T-cell (primary cell): ENCODE measurements at regions of chr12 and their contacts with region 1.

Region 1: GRCh38 chr12:64890873-64891468 is 66.5 kb downstream of the TBC1D30 start:
- DNase-seq: peak in 3 of 35 experiments; percentile 3 to 75 (median 24)
- ATAC-seq: peak in 2 of 4 experiments; percentile 34 to 49
- H3K4me3 ChIP-seq: no peak overlapping the region
- H3K4me3 Mint-ChIP-seq: no peak overlapping the region
- H3K27ac ChIP-seq: no peak overlapping the region
- H3K27ac Mint-ChIP-seq: peak overlapping the region in 1 of 2 donors; percentile 46
- H3K4me1 ChIP-seq: no peaks in the 10 kb centered on the region
- H3K4me1 Mint-ChIP-seq: no peaks in the 10 kb centered on the region
- H3K27me3 ChIP-seq: peaks cover 0 to 3% of the 10 kb centered on the region in 2 experiments
- H3K27me3 Mint-ChIP-seq: peaks cover 10 to 26% of the 10 kb centered on the region in 2 donors

Region 2: DNA sequence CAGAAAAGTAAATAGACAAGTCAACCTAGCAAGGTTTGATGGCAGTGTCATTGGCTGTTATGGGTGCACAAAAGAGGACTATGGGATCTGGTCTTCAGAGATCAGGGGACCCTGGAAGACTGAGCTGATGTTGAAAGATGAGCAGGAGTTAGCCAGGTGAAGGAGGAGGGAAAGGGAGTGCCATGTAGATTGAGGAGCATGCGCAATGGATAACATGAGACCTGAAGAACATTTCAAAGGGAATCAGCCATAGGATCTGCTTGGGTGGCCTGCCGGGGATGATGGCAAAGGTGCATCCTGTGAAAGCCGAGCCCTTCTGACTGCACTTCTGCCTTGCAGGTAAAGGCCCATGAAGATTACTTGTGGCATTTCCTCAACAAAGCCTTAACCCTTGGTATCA is 24.3 kb after region 1 on chr12:
- CTCF ChIA-PET with region 1: no interaction called
- POLR2A ChIA-PET with region 1: no interaction called
- DNase-seq: no peak
- ATAC-seq: no peak
- H3K4me3 ChIP-seq: no peak overlapping the region
- H3K4me3 Mint-ChIP-seq: no peak overlapping the region
- H3K27ac ChIP-seq: no peak overlapping the region
- H3K27ac Mint-ChIP-seq: no peak overlapping the region
- H3K4me1 ChIP-seq: no peaks in the 10 kb centered on the region
- H3K4me1 Mint-ChIP-seq: no peaks in the 10 kb centered on the region
- H3K27me3 ChIP-seq: peaks cover 4 to 8% of the 10 kb centered on the region in 2 experiments
- H3K27me3 Mint-ChIP-seq: peaks cover 25 to 38% of the 10 kb centered on the region in 2 donors

Region 3: GRCh38 chr12:64943686-64944085 is 52.7 kb after region 1 on chr12:
- CTCF ChIA-PET with region 1: no interaction called
- POLR2A ChIA-PET with region 1: no interaction called
- DNase-seq: no peak
- ATAC-seq: no peak
- H3K4me3 ChIP-seq: no peak overlapping the region
- H3K4me3 Mint-ChIP-seq: no peak overlapping the region
- H3K27ac ChIP-seq: no peak overlapping the region
- H3K27ac Mint-ChIP-seq: no peak overlapping the region
- H3K4me1 ChIP-seq: no peaks in the 10 kb centered on the region
- H3K4me1 Mint-ChIP-seq: no peaks in the 10 kb centered on the region
- H3K27me3 ChIP-seq: peaks cover 0 to 3% of the 10 kb centered on the region in 2 experiments
- H3K27me3 Mint-ChIP-seq: peaks cover 7 to 22% of the 10 kb centered on the region in 2 donors

Region 4: GRCh38 chr12:65232476-65233077 is 341.6 kb after region 1 on chr12:
- CTCF ChIA-PET with region 1: interaction called, 15 to 69 read pairs
- POLR2A ChIA-PET with region 1: no interaction called
- DNase-seq: peak in 1 of 35 experiments; percentile 44
- ATAC-seq: peak in 1 of 4 experiments; percentile 32
- H3K4me3 ChIP-seq: no peak overlapping the region
- H3K4me3 Mint-ChIP-seq: no peak overlapping the region
- H3K27ac ChIP-seq: no peak overlapping the region
- H3K27ac Mint-ChIP-seq: peak overlapping the region in 1 of 2 donors; percentile 31
- H3K4me1 ChIP-seq: peaks cover 0 to 2% of the 10 kb centered on the region in 2 experiments
- H3K4me1 Mint-ChIP-seq: peaks cover 5 to 11% (median 10%) of the 10 kb centered on the region in 3 donors
- H3K27me3 ChIP-seq: no peaks in the 10 kb centered on the region
- H3K27me3 Mint-ChIP-seq: no peaks in the 10 kb centered on the region

Region 5: GRCh38 chr12:66087365-66087943 is 1196.5 kb after region 1 on chr12:
- CTCF ChIA-PET with region 1: interaction called, 5 to 17 read pairs
- POLR2A ChIA-PET with region 1: no interaction called
- DNase-seq: peak in 31 of 35 experiments; percentile 9 to 62 (median 34)
- ATAC-seq: peak in 1 of 4 experiments; percentile 60
- H3K4me3 ChIP-seq: no peak overlapping the region
- H3K4me3 Mint-ChIP-seq: no peak overlapping the region
- H3K27ac ChIP-seq: no peak overlapping the region
- H3K27ac Mint-ChIP-seq: no peak overlapping the region
- H3K4me1 ChIP-seq: no peaks in the 10 kb centered on the region
- H3K4me1 Mint-ChIP-seq: no peaks in the 10 kb centered on the region
- H3K27me3 ChIP-seq: peaks cover 0 to 11% of the 10 kb centered on the region in 2 experiments
- H3K27me3 Mint-ChIP-seq: peaks cover 21 to 26% of the 10 kb centered on the region in 2 donors